Activated T-helper 1 cell treated with anti-CD3 and anti-CD28 coated beads, Interleukin-12 subunit alpha, Interleukin-12 subunit beta, Interleukin-2, Interleukin-4 antibody, amounts not matched to agents 30 ng/mL and 10 ng/mL and 1 ng/mL, durations not matched to agents 14 hours and 24 hours and 36 hours (primary cell): ENCODE measurements at regions of chr11 and their contacts with region 1.

Region 1: GRCh38 chr11:31870609-31871309 is 59.6 kb upstream of the PAX6 start:
- DNase-seq: no peak
- H3K4me3 Mint-ChIP-seq: no peak overlapping the region
- H3K27ac Mint-ChIP-seq: no peak overlapping the region
- H3K4me1 Mint-ChIP-seq: no peaks in the 10 kb centered on the region
- H3K27me3 Mint-ChIP-seq: peaks cover 15% of the 10 kb centered on the region

Region 2: DNA sequence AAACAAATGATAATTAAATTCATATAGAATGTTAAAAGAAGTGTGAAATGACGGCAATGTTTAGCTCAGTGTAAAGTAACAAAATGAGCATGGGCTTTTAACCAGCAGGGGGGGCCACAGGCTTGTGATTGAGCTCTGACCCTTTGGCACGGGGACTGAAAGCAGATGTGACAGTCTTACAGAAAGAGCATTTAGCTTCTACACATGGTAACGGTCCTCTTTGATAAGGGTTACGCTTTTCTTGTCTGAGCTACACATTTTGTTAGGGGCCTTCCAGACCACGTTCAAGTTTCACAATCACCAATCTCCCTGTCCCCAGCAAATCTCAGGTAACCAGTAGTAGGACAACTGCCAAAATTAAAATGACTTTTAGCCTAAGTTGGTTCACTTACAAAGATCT is 763.7 kb before region 1 on chr11:
- intact Hi-C with region 1: loop called (anchors 10 kb)
- DNase-seq: no peak
- H3K4me3 Mint-ChIP-seq: no peak overlapping the region
- H3K27ac Mint-ChIP-seq: no peak overlapping the region
- H3K4me1 Mint-ChIP-seq: no peaks in the 10 kb centered on the region
- H3K27me3 Mint-ChIP-seq: no peaks in the 10 kb centered on the region

Region 3: GRCh38 chr11:31369348-31370329 is 501.1 kb before region 1 on chr11 and contains the starts of genes DCDC1 and DNAJC24:
- intact Hi-C with region 1: no loop called
- DNase-seq: peak; percentile 89
- H3K4me3 Mint-ChIP-seq: peak within 1 kb of the TSS; percentile 99
- H3K27ac Mint-ChIP-seq: peak within 1 kb of the TSS; percentile 95
- H3K4me1 Mint-ChIP-seq: peaks cover 25% of the 10 kb centered on the region
- H3K27me3 Mint-ChIP-seq: peaks cover 7% of the 10 kb centered on the region
- total RNA-seq, gene DCDC1: not detected in 2 replicates
- total RNA-seq, gene DNAJC24: 15.8 and 20.6 TPM in 2 replicates